Transverse colon (tissue), 4 donors: ENCODE measurements at regions of chr16 and their contacts with region 1.

Region 1: DNA sequence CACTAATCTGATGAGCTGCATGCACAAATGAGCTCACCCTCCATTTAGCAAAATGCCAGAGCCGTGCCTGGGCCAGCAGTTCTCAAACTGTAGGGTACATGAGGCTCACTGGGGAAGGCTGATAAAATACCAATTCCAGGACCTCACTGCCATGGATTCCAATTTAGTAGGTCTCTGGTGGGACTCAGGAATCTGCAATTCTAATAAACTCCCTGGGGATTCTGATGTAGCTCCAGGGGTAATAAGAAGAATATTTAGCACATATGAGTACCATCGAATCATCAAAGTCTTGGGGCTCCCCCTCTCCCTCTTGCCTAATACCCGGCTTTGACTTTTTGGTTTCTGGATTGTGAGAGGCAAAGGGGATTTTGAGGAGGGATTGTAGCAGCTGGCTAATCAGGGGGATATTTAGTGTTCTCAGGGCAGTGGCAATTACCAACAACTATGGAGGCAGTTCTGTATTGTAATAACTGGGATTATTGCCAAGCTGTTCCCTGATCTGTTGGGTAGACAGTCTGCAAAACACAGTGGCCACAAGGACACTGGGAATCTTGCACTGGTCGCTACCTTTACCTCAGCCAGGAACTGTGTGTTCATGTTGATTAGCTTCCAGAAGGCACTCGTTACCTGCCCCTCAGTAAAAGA is 140.4 kb downstream of the SHISA9 start:
- DNase-seq: no peak
- H3K4me3 ChIP-seq: no peak overlapping the region
- H3K27ac ChIP-seq: peak overlapping the region in 1 of 4 donors; percentile 17
- H3K4me1 ChIP-seq: no peaks in the 10 kb centered on the region
- H3K27me3 ChIP-seq: no peaks in the 10 kb centered on the region
- CTCF ChIP-seq: no peak
- EP300 ChIP-seq: no peak
- POLR2A ChIP-seq: no peak

Region 2: GRCh38 chr16:13012601-13013000 is 29.2 kb before region 1 on chr16:
- in situ Hi-C with region 1: no loop called
- intact Hi-C with region 1: loop called (anchors 1 kb)
- DNase-seq: no peak
- H3K4me3 ChIP-seq: no peak overlapping the region
- H3K27ac ChIP-seq: no peak overlapping the region
- H3K4me1 ChIP-seq: no peaks in the 10 kb centered on the region
- H3K27me3 ChIP-seq: no peaks in the 10 kb centered on the region
- CTCF ChIP-seq: no peak
- EP300 ChIP-seq: no peak
- POLR2A ChIP-seq: no peak